Activated naive CD4-positive, alpha-beta T cell treated with anti-CD3 and anti-CD28 coated beads for 36 hours (primary cell): ENCODE measurements at regions of chr14 and their contacts with region 1.

Region 1: DNA sequence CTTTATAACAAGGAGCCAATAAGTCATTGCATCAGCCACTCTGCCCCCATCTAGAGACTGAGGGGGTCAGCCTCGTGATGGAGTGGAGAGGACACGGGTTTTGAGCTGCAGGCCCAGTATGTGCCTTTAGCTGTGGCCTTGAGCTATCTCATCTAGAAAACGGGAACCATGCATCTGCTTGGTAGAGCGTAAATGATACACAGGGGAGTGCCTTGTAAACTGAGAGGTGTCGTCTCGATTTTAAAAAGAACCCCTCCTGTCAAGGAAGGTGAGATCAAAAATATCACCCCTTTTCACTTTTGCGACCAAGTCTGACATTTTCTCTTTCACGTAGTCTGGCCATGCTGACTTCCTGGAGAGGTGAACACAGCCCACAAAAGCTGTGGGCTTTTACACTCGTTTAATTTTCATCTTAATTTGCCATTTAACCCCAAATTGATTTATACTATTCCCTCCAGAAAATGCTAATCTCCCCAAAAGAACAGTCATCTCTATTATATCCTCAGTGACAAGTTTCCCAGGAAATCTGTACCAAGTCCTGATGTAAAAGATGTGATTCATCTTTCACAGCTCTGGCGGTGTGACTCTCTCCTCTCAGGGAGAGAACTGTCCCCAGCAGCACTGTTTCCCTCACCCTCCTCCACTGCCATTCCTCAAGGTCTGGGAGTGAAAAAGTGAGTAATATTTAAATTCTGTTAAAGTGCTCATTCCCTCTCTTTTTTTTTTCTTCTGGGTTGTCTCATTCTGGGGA is 30.6 kb downstream of the VCPKMT start:
- DNase-seq: peak; percentile 77
- H3K4me3 Mint-ChIP-seq: peak overlapping the region; percentile 6
- H3K27ac Mint-ChIP-seq: peak overlapping the region; percentile 83
- H3K4me1 Mint-ChIP-seq: peaks cover 93% of the 10 kb centered on the region
- H3K27me3 Mint-ChIP-seq: no peaks in the 10 kb centered on the region

Region 2: DNA sequence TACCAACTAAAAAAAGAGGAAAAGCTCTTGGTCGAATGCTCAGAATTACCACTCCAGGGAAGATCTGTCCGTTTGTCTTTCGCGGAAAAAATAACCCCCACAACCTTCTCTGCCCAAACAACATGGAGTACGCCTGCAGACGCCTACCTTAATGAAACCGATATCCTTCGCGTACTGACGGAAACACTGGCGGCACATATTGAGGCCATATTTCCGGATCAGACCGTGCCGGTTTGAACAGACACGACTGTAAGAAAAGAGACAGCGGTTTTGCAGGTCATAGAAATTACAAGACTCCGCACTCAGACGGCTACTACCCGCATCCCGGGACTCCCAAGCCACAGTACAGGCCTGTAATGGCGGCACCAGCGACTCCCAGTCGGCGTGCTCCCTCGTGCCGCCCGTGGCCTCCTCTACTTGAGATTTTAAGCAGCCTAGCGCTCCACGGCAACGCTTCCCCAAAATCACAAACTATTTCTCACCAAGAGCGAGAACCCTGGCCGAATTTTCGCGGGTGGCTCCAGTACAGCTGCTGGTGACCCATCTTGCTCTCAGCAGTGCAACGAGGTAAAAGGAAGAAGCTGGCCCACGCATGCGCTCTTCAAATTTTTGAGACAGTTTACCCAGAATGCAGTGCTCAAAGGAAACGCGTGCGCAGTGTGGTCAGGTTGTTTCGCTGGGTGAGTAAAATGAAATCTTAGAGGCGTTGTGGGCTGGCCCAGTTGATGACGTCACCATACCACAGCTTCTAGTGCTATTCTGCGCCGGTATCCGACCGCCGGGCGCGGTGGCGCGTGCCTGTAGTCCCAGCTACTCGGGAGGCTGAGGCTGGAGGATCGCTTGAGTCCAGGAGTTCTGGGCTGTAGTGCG is 499.7 kb before region 1 on chr14 and contains the start of gene RPS29:
- CTCF ChIA-PET with region 1: interaction called, 3 read pairs
- intact Hi-C with region 1: loop called (anchors 2 kb)
- DNase-seq: peak; percentile 99
- H3K4me3 Mint-ChIP-seq: peak within 1 kb of the TSS; percentile 87
- H3K27ac Mint-ChIP-seq: peak within 1 kb of the TSS; percentile 98
- H3K4me1 Mint-ChIP-seq: peaks cover 40% of the 10 kb centered on the region
- H3K27me3 Mint-ChIP-seq: peaks cover 3% of the 10 kb centered on the region
- total RNA-seq, gene RPS29: 1,858 to 2,382 TPM

Region 3: GRCh38 chr14:49862089-49862673 is 223.6 kb before region 1 on chr14:
- CTCF ChIA-PET with region 1: interaction called, 28 read pairs
- intact Hi-C with region 1: no loop called
- DNase-seq: peak; percentile 91
- H3K4me3 Mint-ChIP-seq: no peak overlapping the region
- H3K27ac Mint-ChIP-seq: no peak overlapping the region
- H3K4me1 Mint-ChIP-seq: peaks cover 14% of the 10 kb centered on the region
- H3K27me3 Mint-ChIP-seq: peaks cover 2% of the 10 kb centered on the region

Region 4: DNA sequence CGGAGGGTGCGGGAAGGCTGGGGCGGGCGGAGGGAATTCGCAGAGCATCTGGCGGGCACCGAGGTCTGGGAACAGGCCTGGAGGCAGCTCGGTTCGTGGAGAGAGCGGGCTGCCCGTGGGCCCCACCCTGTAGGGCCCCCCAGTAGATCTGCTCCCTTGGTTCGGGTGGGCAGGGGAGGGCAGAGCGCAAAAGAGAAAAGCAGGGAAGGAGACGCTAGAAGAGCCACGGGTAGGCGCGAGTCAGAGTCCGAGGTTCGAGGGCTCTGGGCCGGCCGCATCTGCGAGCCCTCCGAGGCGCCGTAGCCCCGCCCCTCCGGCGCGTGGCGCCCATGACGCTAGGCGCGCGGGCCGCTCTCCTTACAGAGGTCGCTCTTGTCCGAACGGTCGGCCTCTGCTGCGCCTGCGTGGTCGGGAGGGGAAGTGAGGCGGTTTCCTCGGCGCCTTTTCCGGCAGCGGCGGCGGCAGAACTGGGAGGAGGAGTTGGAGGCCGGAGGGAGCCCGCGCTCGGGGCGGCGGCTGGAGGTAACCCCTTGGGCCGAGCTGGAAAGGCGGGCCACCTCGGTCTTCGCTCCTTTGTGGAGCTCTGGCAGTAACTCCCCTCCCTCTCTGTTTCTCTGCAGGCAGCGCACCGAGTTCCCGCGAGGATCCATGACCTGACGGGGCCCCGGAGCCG is 193.0 kb before region 1 on chr14 and contains the start of gene ARF6:
- CTCF ChIA-PET with region 1: interaction called, 7 read pairs
- intact Hi-C with region 1: loop called (anchors 1 kb)
- DNase-seq: peak; percentile 98
- H3K4me3 Mint-ChIP-seq: peak within 1 kb of the TSS; percentile 100
- H3K27ac Mint-ChIP-seq: peak within 1 kb of the TSS; percentile 100
- H3K4me1 Mint-ChIP-seq: peaks cover 19% of the 10 kb centered on the region
- H3K27me3 Mint-ChIP-seq: no peaks in the 10 kb centered on the region
- total RNA-seq, gene ARF6: 128 to 129 TPM

Region 5: DNA sequence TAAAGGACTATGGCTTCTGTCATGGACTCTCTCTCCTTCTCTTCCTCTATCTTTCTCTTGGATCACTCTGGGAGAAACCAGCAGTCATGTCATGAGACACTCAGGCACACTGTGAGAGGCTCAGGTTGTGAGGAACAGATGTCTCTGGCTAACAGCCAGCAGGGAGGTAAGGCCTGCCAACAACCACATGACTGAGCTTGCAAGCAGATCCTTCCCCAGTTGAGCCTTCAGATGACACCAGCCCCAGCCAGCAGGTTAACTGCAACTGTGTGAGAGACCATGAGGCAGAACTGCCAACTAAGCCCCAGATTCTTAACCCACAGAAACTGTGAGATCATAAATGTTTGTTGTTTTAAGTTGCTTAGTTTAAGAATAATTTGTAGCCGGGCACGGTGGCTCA is 60.0 kb before region 1 on chr14:
- CTCF ChIA-PET with region 1: no interaction called
- intact Hi-C with region 1: loop called (anchors 1 kb)
- DNase-seq: peak; percentile 41
- H3K4me3 Mint-ChIP-seq: no peak overlapping the region
- H3K27ac Mint-ChIP-seq: no peak overlapping the region
- H3K4me1 Mint-ChIP-seq: peaks cover 27% of the 10 kb centered on the region
- H3K27me3 Mint-ChIP-seq: no peaks in the 10 kb centered on the region

Region 6: GRCh38 chr14:50099335-50099734 is 13.6 kb after region 1 on chr14:
- CTCF ChIA-PET with region 1: interaction called, 21 read pairs
- intact Hi-C with region 1: loop called (anchors 1 kb)
- DNase-seq: no peak
- H3K4me3 Mint-ChIP-seq: no peak overlapping the region
- H3K27ac Mint-ChIP-seq: no peak overlapping the region
- H3K4me1 Mint-ChIP-seq: peaks cover 57% of the 10 kb centered on the region
- H3K27me3 Mint-ChIP-seq: no peaks in the 10 kb centered on the region